Sigmoid colon (tissue), 7 donors: ENCODE measurements at regions of chrX and their contacts with region 1.

Region 1: DNA sequence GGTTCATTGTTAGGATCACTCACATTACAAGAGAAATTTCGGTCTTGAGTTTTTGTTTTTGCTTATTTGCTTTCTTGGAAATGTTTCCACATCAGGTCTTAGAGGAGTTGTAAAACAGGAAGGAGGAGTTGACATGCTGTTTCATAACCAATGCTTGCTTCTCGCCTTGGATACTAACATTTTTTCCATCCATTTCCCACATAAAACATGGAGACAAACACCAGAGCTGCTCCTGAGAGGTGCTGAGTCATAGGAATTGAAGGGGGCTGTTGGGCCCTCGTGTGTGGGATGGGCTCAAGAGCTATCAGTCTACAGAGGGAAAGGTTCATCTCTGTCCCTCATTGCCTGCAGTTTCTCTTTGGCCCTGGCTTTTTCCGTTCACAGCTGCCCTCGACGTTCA is 29.9 kb downstream of the TBL1X start:
- DNase-seq: peak; percentile 77
- H3K4me3 ChIP-seq: peak overlapping the region in 1 of 4 donors; percentile 24
- H3K27ac ChIP-seq: peak overlapping the region in 3 of 4 donors; percentile 39 to 66 (median 64)
- H3K4me1 ChIP-seq: peaks cover 0 to 18% (median 7%) of the 10 kb centered on the region in 4 donors
- H3K27me3 ChIP-seq: no peaks in the 10 kb centered on the region
- CTCF ChIP-seq: no peak
- EP300 ChIP-seq: peak; percentile 47 to 85 (median 72)
- POLR2A ChIP-seq: no peak

Region 2: DNA sequence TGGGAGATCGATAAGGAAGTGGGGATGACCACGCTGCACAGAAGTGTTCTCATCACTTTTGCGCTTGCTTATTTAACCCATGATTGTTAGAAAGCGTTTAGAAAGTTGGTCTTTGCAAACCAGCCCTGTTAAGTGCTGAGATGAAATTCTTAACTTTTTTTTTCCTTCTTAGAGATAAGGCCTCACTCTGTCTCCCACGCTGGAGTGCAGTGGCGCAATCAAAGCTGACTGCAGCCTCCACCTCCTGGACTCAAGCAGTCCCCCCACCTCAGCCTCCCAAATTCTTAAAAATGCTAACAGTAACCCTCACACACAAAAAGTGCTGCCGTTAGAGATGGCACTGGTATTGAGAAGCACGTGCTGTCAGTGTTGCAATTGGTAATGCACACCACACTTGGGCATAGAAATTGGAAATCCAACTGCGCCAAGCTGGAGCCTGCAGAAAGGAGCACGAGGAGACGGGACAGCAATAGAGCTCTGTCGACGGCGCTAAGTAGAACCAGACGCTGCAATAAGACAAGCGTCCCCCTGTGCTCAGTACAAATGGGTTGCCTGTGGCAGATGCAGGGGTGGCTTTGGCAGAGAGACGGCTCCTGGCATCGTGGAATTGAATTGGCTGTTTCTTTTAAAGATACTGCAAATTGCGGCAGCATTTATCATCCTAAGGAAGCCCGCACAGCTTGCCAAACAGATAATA is 83.5 kb after region 1 on chrX:
- intact Hi-C with region 1: no loop called
- DNase-seq: no peak
- H3K4me3 ChIP-seq: no peak overlapping the region
- H3K27ac ChIP-seq: no peak overlapping the region
- H3K4me1 ChIP-seq: peaks cover 0 to 10% (median 0%) of the 10 kb centered on the region in 4 donors
- H3K27me3 ChIP-seq: no peaks in the 10 kb centered on the region
- CTCF ChIP-seq: no peak
- EP300 ChIP-seq: no peak
- POLR2A ChIP-seq: no peak

Region 3: DNA sequence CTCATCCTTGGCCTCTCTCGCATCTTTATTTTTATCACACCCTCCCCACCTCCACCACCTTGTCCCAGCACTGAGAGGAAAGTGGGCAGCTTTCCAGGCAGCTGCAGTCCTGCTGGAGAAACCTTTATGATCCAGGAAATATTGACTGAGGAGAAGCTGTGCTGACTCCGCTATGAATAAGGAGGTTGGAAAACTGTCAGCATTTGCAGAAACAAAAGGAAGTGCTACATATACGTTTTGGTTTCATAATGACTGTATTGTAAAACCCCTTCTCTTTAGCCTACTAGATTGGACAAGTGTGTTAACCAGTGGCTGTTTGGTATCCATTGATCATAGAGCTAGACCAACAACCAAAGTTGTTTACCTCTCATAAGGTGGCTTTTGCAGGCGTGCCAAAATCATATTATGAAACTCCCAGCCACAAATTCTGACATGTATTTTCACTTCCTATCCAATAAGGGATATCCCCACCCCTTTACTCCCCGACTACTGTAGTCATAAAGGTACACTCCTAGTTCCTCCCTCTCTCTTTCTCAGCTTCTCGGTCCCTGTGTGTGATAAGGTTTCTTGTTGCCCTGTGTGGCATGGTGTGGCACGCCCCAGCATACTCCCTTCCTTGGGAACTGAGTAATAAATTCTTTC is 182.4 kb after region 1 on chrX:
- intact Hi-C with region 1: loop called (anchors 10 kb)
- DNase-seq: peak; percentile 78
- H3K4me3 ChIP-seq: no peak overlapping the region
- H3K27ac ChIP-seq: peak overlapping the region in 3 of 4 donors; percentile 8 to 52 (median 47)
- H3K4me1 ChIP-seq: peaks cover 0 to 7% (median 0%) of the 10 kb centered on the region in 4 donors
- H3K27me3 ChIP-seq: no peaks in the 10 kb centered on the region
- CTCF ChIP-seq: no peak
- EP300 ChIP-seq: no peak
- POLR2A ChIP-seq: no peak